AG04449 (cell line): ENCODE measurements at regions of chr5 and their contacts with region 1.

Region 1: DNA sequence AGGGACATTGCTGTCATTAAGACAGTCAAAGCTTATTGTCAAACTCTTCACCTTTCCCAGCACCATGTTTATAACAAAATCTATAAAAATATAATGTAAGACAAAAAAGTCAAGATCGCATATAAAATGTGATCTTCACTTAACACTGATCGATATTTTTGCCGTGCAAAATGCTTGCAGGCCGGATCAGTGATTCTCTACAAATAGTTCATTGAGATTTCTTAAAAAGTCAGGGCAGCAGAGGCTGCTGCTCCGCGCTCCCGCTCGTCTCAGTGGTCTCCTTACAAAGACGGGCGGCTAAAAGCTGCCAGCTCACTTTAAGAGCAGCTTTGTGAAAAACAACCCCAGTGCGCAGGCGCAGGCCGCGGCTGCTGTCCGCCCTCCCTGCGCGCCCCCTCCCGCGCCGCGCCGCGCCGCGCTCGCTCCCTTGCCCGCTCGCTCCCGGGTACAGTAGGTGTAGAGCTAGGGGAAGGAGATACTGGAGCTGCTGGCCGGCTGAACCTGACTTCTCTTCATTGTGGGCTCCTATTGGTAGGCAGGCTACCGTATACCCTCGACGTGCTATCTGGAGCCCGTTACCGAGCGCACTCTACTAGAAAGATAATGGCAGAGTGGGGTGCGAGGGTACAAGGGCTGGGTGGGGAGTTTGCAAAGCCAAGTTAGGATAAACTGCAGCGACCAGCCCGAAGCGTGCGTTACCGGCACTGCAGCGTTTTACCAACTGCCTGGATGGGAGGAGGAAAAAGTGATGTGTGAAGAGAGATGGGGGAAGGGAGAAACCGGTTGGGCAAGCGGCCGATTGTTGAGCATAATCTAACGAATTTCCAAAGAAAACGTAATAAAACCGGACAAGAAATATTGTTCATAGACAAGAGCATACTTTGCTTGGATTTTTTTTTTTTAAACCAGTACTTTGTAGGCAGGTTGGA is at the start of gene ARRDC3:
- DNase-seq: peak; percentile 59
- H3K4me3 ChIP-seq: peak within 1 kb of the TSS; percentile 86
- CTCF ChIP-seq: no peak

Region 2: DNA sequence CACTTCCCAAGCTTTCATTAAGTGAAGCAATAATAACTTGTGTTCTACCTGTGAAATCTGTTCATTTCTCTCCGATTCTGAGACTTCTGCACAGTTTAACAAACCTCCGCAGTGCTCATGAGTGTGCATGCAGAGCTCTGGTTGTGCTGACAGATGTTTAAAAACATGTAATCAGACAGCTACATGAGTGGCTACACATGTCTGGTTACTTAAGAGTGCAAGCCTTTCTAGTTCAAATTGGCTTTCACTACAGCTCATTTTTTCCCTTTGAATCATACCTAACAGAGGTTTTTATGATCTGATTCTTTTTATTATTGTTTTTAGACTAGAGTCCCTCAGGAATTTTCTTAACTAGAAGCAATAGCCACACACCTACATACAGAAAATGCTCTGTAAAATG is 310.4 kb before region 1 on chr5:
- CTCF ChIA-PET with region 1: interaction called, 18 read pairs
- POLR2A ChIA-PET with region 1: interaction called, 3 read pairs
- DNase-seq: peak; percentile 23
- H3K4me3 ChIP-seq: no peak overlapping the region
- CTCF ChIP-seq: no peak

Region 3: GRCh38 chr5:91110686-91111085 is 272.6 kb before region 1 on chr5:
- CTCF ChIA-PET with region 1: interaction called, 87 read pairs
- POLR2A ChIA-PET with region 1: interaction called, 4 read pairs
- DNase-seq: peak; percentile 46
- H3K4me3 ChIP-seq: no peak overlapping the region
- CTCF ChIP-seq: no peak

Region 4: DNA sequence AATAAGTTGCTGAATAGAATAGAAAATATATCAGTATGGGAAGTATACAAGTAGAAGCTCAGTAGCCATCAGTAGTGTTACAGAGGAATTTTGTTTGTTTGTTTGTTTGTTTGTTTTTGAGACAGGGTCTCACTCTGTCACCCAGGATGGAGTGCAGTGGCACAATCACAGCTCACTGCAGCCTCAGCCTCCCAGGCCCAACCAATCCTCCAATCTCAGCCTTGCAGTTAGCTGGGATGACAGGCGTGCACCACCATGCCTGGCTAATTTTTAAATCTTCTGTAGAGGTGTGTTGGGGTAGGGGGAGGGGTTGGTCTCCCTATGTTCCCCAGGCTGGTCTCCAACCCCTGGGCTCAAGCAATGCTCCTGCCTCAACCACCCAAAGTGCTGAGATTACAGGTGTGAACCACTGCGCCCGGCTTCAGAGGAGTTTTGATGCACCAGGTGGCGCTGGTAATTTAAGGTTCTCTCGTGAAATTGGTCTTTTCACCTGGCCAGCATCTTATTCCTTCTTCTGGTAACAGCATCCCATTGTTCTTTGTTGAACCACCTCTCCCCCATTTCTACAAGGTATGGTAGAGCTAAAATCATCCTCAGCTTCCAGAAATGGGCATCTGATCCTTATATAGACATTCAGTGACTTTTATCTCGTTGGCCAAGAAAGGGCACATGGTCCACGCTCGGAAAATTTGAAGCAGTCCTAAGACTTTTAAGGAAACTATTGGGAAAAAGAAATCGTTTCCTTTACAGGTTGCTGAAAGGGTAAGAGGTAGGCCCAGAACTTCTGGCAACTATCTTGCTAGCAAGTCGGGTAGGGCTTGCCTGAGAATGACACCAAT is 157.2 kb before region 1 on chr5:
- CTCF ChIA-PET with region 1: interaction called, 28 read pairs
- POLR2A ChIA-PET with region 1: no interaction called
- DNase-seq: no peak
- H3K4me3 ChIP-seq: no peak overlapping the region
- CTCF ChIP-seq: no peak

Region 5: GRCh38 chr5:91311697-91312501 is 71.4 kb before region 1 on chr5:
- CTCF ChIA-PET with region 1: interaction called, 11 read pairs
- POLR2A ChIA-PET with region 1: interaction called, 5 read pairs
- DNase-seq: peak; percentile 97
- H3K4me3 ChIP-seq: no peak overlapping the region
- CTCF ChIP-seq: no peak

Region 6: GRCh38 chr5:91419571-91420537 is 36.6 kb after region 1 on chr5:
- CTCF ChIA-PET with region 1: interaction called, 84 read pairs
- POLR2A ChIA-PET with region 1: interaction called, 4 read pairs
- DNase-seq: no peak
- H3K4me3 ChIP-seq: no peak overlapping the region
- CTCF ChIP-seq: peak; percentile 13